CD4-positive, alpha-beta T cell (primary cell): ENCODE measurements at regions of chr1 and their contacts with region 1.

Region 1: GRCh38 chr1:28088168-28088961 is at the start of gene EYA3:
- DNase-seq: peak; percentile 97 to 100 (median 99)
- ATAC-seq: peak; percentile 92
- H3K4me3 ChIP-seq: peak within 1 kb of the TSS; percentile 81
- H3K4me3 Mint-ChIP-seq: peak within 1 kb of the TSS; percentile 97
- H3K27ac ChIP-seq: peak within 1 kb of the TSS; percentile 69 to 86
- H3K27ac Mint-ChIP-seq: peak within 1 kb of the TSS; percentile 79
- H3K4me1 ChIP-seq: peaks cover 22% of the 10 kb centered on the region
- H3K4me1 Mint-ChIP-seq: peaks cover 42% of the 10 kb centered on the region
- H3K27me3 ChIP-seq: no peaks in the 10 kb centered on the region
- H3K27me3 Mint-ChIP-seq: no peaks in the 10 kb centered on the region
- CTCF ChIP-seq: no peak
- total RNA-seq, gene EYA3: 5.7 to 6.4 TPM

Region 2: GRCh38 chr1:27519331-27520258 is 568.8 kb before region 1 on chr1:
- CTCF ChIA-PET with region 1: no interaction called
- POLR2A ChIA-PET with region 1: no interaction called
- intact Hi-C with region 1: no loop called
- DNase-seq: peak in 1 of 14 experiments; percentile 19
- ATAC-seq: no peak
- H3K4me3 ChIP-seq: no peak overlapping the region
- H3K4me3 Mint-ChIP-seq: no peak overlapping the region
- H3K27ac ChIP-seq: no peak overlapping the region
- H3K27ac Mint-ChIP-seq: peak overlapping the region; percentile 96
- H3K4me1 ChIP-seq: peaks cover 56% of the 10 kb centered on the region
- H3K4me1 Mint-ChIP-seq: peaks cover 66% of the 10 kb centered on the region
- H3K27me3 ChIP-seq: no peaks in the 10 kb centered on the region
- H3K27me3 Mint-ChIP-seq: no peaks in the 10 kb centered on the region
- CTCF ChIP-seq: no peak

Region 3: GRCh38 chr1:27725374-27726173 is 362.8 kb before region 1 on chr1 and contains the start of gene FAM76A:
- CTCF ChIA-PET with region 1: no interaction called
- POLR2A ChIA-PET with region 1: no interaction called
- intact Hi-C with region 1: loop called in 1 of 2 experiments (anchors 10 kb)
- DNase-seq: peak; percentile 99 to 100 (median 99)
- ATAC-seq: peak; percentile 92
- H3K4me3 ChIP-seq: peak within 1 kb of the TSS; percentile 74
- H3K4me3 Mint-ChIP-seq: peak within 1 kb of the TSS; percentile 85
- H3K27ac ChIP-seq: peak within 1 kb of the TSS; percentile 82 to 85
- H3K27ac Mint-ChIP-seq: peak within 1 kb of the TSS; percentile 89
- H3K4me1 ChIP-seq: peaks cover 19% of the 10 kb centered on the region
- H3K4me1 Mint-ChIP-seq: peaks cover 24% of the 10 kb centered on the region
- H3K27me3 ChIP-seq: no peaks in the 10 kb centered on the region
- H3K27me3 Mint-ChIP-seq: no peaks in the 10 kb centered on the region
- CTCF ChIP-seq: peak; percentile 60
- total RNA-seq, gene FAM76A: 26.0 to 28.7 TPM

Region 4: GRCh38 chr1:27872059-27872801 is 216.1 kb before region 1 on chr1 and contains the start of gene THEMIS2:
- CTCF ChIA-PET with region 1: no interaction called
- POLR2A ChIA-PET with region 1: interaction called, 5 read pairs
- intact Hi-C with region 1: loop called in 1 of 2 experiments (anchors 1 kb)
- DNase-seq: peak; percentile 66 to 92 (median 78)
- ATAC-seq: peak; percentile 78
- H3K4me3 ChIP-seq: peak within 1 kb of the TSS; percentile 88
- H3K4me3 Mint-ChIP-seq: peak within 1 kb of the TSS; percentile 100
- H3K27ac ChIP-seq: peak within 1 kb of the TSS; percentile 24 to 51
- H3K27ac Mint-ChIP-seq: peak within 1 kb of the TSS; percentile 85
- H3K4me1 ChIP-seq: peaks cover 85% of the 10 kb centered on the region
- H3K4me1 Mint-ChIP-seq: peaks cover 36% of the 10 kb centered on the region
- H3K27me3 ChIP-seq: no peaks in the 10 kb centered on the region
- H3K27me3 Mint-ChIP-seq: no peaks in the 10 kb centered on the region
- CTCF ChIP-seq: no peak
- total RNA-seq, gene THEMIS2: 20.2 to 21.6 TPM

Region 5: GRCh38 chr1:27959400-27960217 is 128.8 kb before region 1 on chr1 and contains the start of gene XKR8:
- CTCF ChIA-PET with region 1: interaction called, 3 read pairs
- POLR2A ChIA-PET with region 1: no interaction called
- intact Hi-C with region 1: loop called in 1 of 2 experiments (anchors 5 kb)
- DNase-seq: peak; percentile 72 to 93 (median 84)
- ATAC-seq: peak; percentile 99
- H3K4me3 ChIP-seq: peak within 1 kb of the TSS; percentile 94
- H3K4me3 Mint-ChIP-seq: peak within 1 kb of the TSS; percentile 81
- H3K27ac ChIP-seq: peak within 1 kb of the TSS; percentile 67 to 79
- H3K27ac Mint-ChIP-seq: peak within 1 kb of the TSS; percentile 80
- H3K4me1 ChIP-seq: peaks cover 36% of the 10 kb centered on the region
- H3K4me1 Mint-ChIP-seq: peaks cover 16% of the 10 kb centered on the region
- H3K27me3 ChIP-seq: no peaks in the 10 kb centered on the region
- H3K27me3 Mint-ChIP-seq: no peaks in the 10 kb centered on the region
- CTCF ChIP-seq: no peak
- total RNA-seq, gene XKR8: 5.4 to 5.5 TPM

Region 6: DNA sequence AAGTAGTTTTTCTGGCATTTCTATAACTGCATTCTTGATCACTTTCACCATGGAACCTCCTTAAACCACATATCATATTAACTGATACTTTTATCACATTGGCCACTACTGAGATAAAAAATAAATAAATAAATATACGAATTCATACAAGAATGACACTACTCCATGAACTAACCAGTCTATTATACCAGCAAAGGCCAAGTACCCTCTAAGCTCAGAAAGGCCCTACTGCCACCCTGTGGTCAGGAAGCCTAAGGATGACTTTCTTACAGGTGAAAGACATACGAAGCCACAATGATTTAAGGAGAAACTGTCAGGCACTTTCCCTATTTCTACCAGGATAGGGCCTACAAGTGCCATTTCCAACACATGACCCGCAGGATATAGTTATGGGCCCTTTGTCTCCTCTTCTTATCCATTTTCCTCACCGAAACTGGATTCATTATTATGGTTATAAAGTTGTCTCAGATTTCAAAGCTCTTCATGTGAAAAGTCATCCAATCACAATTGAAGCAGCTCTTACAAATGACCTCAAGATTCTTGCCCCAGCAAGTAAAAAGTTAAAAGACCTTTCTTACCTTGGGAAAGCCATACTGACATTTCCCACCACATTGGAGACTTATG is 120.6 kb after region 1 on chr1:
- CTCF ChIA-PET with region 1: interaction called, 25 read pairs
- POLR2A ChIA-PET with region 1: interaction called, 3 read pairs
- intact Hi-C with region 1: loop called (anchors 1 to 2 kb)
- DNase-seq: peak; percentile 38 to 81 (median 54)
- ATAC-seq: peak; percentile 86
- H3K4me3 ChIP-seq: no peak overlapping the region
- H3K4me3 Mint-ChIP-seq: no peak overlapping the region
- H3K27ac ChIP-seq: no peak overlapping the region
- H3K27ac Mint-ChIP-seq: no peak overlapping the region
- H3K4me1 ChIP-seq: no peaks in the 10 kb centered on the region
- H3K4me1 Mint-ChIP-seq: peaks cover 7% of the 10 kb centered on the region
- H3K27me3 ChIP-seq: no peaks in the 10 kb centered on the region
- H3K27me3 Mint-ChIP-seq: no peaks in the 10 kb centered on the region
- CTCF ChIP-seq: peak; percentile 68

Region 7: DNA sequence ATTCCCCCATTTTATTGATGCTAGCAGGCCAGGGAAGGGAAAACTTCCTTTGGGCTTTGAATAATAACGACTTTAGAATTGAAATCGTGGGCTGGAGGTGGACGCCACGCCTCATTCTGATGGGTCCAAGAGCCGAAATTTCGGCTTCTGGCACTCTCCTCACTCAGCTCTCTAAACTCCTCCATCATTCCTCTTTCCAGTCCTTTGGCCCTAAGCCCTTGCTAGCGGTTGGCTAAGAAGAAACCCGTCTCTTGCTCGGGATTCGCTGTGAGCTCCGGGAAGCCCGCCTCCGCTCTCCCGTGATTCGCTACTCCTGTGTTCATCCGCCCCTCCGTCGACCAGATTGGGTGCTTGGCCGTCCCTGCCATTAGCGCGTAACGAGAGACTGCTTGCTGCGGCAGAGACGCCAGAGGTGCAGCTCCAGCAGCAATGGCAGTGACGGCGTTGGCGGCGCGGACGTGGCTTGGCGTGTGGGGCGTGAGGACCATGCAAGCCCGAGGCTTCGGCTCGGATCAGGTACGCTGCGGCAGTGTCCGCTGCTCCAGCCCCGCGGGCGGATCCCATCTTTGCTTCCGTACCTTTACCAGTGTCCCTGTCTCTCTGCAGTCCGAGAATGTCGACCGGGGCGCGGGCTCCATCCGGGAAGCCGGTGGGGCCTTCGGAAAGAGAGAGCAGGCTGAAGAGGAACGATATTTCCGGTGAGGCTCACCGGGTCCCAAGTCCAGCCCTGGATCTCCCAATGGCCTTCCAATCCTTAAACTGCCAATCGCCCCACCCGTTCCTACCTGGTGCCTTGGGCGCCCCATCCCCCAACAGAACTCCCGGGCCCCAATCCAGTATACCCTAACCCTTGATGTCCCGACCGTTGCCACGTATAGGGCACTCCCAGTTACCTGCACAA is 147.6 kb after region 1 on chr1 and contains the start of gene ATP5IF1:
- CTCF ChIA-PET with region 1: no interaction called
- POLR2A ChIA-PET with region 1: no interaction called
- intact Hi-C with region 1: loop called in 1 of 2 experiments (anchors 5 kb)
- DNase-seq: peak; percentile 87 to 98 (median 92)
- ATAC-seq: peak; percentile 96
- H3K4me3 ChIP-seq: peak within 1 kb of the TSS; percentile 97
- H3K4me3 Mint-ChIP-seq: no peak within 1 kb of the TSS
- H3K27ac ChIP-seq: peak within 1 kb of the TSS; percentile 80 to 81
- H3K27ac Mint-ChIP-seq: no peak within 1 kb of the TSS
- H3K4me1 ChIP-seq: peaks cover 48% of the 10 kb centered on the region
- H3K4me1 Mint-ChIP-seq: peaks cover 19% of the 10 kb centered on the region
- H3K27me3 ChIP-seq: no peaks in the 10 kb centered on the region
- H3K27me3 Mint-ChIP-seq: no peaks in the 10 kb centered on the region
- CTCF ChIP-seq: no peak
- total RNA-seq, gene ATP5IF1: 77.4 to 78.0 TPM

Region 8: GRCh38 chr1:28552758-28553663 is 464.6 kb after region 1 on chr1 and contains the start of gene TRNAU1AP:
- CTCF ChIA-PET with region 1: no interaction called
- POLR2A ChIA-PET with region 1: no interaction called
- intact Hi-C with region 1: loop called in 1 of 2 experiments (anchors 10 kb)
- DNase-seq: peak; percentile 94 to 99 (median 96)
- ATAC-seq: peak; percentile 95
- H3K4me3 ChIP-seq: peak within 1 kb of the TSS; percentile 84
- H3K4me3 Mint-ChIP-seq: peak within 1 kb of the TSS; percentile 99
- H3K27ac ChIP-seq: peak within 1 kb of the TSS; percentile 66 to 68
- H3K27ac Mint-ChIP-seq: peak within 1 kb of the TSS; percentile 99
- H3K4me1 ChIP-seq: peaks cover 22% of the 10 kb centered on the region
- H3K4me1 Mint-ChIP-seq: peaks cover 31% of the 10 kb centered on the region
- H3K27me3 ChIP-seq: no peaks in the 10 kb centered on the region
- H3K27me3 Mint-ChIP-seq: no peaks in the 10 kb centered on the region
- CTCF ChIP-seq: no peak
- total RNA-seq, gene TRNAU1AP: 21.4 to 24.2 TPM